ENCODE measurements at regions of chr22 and their contacts with region 1.

Region 1: DNA sequence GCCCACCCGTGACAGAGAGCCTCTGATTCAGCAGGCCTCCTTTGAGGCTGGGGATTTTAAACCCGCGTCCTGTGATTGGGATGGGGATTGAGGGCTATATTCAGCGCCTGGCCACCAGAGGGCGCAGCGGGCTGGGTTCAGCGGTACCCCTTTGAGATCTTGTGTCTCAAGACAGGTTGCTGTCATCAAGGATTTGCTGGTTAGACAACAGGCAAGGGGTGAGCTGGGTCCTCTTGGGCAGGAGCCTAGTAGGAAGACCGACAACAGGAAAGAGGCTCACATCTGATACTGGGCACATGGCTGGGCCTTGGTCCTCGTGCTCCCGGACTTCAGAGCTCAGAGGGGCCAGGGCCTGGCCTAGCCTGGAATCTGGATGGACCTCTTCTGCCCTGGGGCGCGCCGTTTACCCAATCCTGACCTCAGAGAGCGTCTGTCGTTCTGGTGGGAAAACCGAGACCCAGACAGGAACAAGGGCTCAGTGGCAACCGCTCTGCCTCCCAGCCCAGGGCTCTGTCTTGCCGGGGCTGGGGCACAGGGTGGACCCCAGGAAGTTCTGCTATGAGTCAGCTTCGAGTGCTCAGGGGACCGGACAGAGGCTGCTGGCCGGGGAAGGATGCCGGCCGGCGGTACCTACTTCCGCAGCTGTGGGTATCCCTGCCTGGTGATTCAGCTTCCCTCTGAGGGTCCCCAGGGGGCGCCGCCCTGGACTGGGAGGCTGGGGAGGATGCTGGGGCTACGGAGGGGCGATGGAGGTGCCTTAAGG is 929 bp upstream of the SLC35E4 start:
- DNase-seq: peak; percentile 92
- CTCF ChIP-seq: peak; percentile 97

Region 2: DNA sequence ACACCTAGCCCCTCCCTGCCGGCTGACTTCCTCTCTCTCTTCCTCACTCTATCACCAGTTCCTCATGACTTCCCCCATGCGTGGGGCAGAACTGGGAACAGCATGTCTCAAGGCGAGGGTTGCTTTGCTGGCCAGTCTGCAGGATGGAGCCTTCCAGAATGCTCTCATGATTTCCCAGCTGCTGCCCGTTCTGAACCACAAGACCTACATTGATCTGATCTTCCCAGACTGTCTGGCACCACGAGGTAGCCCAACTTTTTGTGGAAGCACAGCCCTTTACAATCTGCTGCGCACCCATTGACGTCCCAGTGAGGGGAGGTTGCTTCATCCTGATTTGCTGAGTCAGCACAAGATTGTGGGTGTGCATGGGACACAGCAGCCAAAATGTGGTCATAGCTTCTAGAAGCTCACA is 19.1 kb before region 1 on chr22:
- CTCF ChIA-PET with region 1: interaction called, 58 read pairs
- POLR2A ChIA-PET with region 1: no interaction called
- DNase-seq: no peak
- CTCF ChIP-seq: no peak

Region 3: DNA sequence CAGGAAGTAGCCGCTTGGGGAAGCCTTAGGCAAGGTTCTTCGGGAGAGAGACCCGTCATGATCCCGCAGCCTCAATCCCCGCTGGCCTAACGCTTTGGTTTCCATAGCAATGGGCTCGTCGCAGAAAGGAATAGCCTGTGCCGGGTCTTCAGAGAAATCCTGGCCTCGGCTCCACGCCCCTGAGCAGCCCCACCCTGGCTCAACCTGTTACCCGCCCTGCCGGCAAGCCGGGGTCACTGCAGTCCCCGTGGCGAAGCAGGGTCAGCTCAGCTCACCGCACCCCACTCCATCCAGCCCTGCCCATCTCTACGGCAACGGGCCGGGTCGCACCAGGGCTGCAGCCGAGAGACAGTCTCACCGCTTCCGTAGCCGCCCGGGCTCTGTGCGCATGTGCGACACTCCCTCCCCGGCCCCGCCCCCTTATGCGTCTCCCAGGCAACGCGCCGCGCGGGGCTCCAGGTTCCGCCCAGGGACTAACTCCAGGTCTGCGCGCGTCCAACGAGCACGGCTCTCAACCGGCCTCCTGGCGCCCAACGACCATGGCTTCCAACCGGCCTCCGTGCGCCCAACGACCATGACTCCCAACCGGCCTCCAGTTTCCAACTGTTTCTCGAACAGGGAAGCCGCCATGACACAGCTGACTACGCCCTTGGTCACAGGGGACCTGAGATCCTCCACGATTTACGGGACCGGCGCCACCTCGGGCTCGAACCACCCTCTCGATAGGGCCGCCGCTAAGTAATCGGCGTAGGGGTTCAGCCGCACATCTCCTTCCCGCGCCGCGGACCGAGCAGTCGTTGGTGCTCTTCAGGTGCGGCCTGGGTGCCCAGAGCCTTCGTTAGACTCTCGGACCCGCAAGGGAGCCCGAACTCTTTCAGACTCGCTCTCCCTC is 33.1 kb after region 1 on chr22 and contains the start of gene DUSP18:
- CTCF ChIA-PET with region 1: interaction called, 11 read pairs
- POLR2A ChIA-PET with region 1: no interaction called
- DNase-seq: peak; percentile 99
- CTCF ChIP-seq: peak; percentile 2

Region 4: DNA sequence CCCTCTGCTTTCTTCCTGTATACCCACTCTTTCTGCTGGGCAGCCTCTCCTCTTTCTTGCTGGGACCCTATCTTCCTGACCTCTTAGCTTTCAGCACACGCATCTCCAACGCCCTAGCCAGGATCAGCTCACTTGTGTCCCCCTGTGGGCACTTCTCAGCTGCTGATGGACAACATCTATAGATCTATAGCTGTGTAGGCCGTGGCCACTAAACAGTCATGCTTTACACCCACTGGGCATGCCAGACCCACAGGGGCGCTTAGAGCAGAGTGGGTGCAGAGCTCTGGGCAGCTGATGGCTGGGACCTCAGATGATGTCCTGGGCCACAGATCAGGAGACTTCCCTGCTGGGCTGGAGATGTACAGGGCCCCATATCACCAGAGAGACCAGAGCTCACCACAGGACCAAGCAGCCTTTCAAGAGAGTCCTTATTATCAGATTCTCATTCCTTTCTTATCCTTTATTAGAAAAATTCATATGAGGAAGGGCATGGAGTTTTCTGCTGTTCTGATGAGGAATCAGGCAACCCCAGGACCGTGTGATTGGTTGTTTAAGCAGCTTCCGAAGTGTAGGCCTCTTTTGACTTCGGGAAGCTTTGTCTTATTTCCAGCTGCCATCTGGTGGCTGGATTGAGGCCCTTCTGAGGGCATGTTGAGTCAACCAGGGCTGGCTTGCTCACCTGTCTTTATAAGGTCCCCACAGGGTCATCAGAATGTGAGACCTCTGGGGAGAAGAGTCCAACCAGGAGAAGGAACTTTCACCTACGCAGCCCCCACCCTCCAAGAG is 120.5 kb after region 1 on chr22:
- CTCF ChIA-PET with region 1: interaction called, 208 read pairs
- POLR2A ChIA-PET with region 1: interaction called, 3 read pairs
- DNase-seq: peak; percentile 85
- CTCF ChIP-seq: peak; percentile 83

Region 5: DNA sequence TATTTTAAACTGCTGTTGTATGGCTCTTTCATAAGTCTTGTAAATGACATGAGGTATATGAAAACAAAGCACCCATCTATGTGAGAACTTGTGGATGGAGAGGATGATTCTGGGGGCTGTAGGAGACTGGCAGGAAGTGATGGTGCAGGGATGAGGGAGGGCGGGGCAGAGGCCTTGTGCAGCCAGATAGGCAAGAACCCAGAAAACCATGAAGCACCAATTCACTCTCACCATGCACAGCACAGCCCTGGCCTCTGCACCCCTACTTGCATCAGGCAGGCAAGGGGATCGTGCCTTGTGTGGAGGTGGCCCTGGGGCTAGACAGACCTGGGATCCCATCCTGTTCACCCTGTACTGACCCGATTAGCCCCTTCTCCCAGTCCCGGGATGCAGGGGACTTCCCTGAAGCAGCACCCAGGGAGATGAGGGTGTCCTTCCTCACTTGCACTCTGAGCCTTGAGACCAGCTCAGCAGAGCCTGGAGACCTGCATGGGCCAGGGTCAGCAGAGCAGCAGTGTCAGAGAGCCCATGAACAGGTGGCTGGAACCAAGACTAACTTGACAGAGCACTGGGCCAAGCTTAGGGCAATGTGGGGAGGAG is 248.4 kb after region 1 on chr22:
- CTCF ChIA-PET with region 1: no interaction called
- POLR2A ChIA-PET with region 1: no interaction called
- DNase-seq: no peak
- CTCF ChIP-seq: no peak

Measured in GM10248 (cell line).